ENCODE measurements at regions of chr12 and their contacts with region 1.

Region 1: GRCh38 chr12:116508145-116509121 is 50.7 kb upstream of the MAP1LC3B2 start:
- DNase-seq: peak; percentile 65
- ATAC-seq: peak; percentile 92
- H3K4me3 ChIP-seq: peak overlapping the region in 4 of 5 experiments; percentile 38 to 56 (median 48)
- H3K4me3 Mint-ChIP-seq: peak overlapping the region; percentile 87
- H3K27ac ChIP-seq: no peak overlapping the region
- H3K27ac Mint-ChIP-seq: peak overlapping the region; percentile 57
- H3K4me1 ChIP-seq: peaks cover 9 to 16% of the 10 kb centered on the region in 2 donors
- H3K4me1 Mint-ChIP-seq: peaks cover 7% of the 10 kb centered on the region
- H3K27me3 ChIP-seq: peaks cover 0 to 4% (median 0%) of the 10 kb centered on the region in 4 experiments
- H3K27me3 Mint-ChIP-seq: peaks cover 4% of the 10 kb centered on the region
- CTCF ChIP-seq: no peak

Region 2: GRCh38 chr12:116466536-116466935 is 41.9 kb before region 1 on chr12:
- CTCF ChIA-PET with region 1: no interaction called
- POLR2A ChIA-PET with region 1: no interaction called
- intact Hi-C with region 1: no loop called
- DNase-seq: no peak
- ATAC-seq: no peak
- H3K4me3 ChIP-seq: no peak overlapping the region
- H3K4me3 Mint-ChIP-seq: no peak overlapping the region
- H3K27ac ChIP-seq: no peak overlapping the region
- H3K27ac Mint-ChIP-seq: no peak overlapping the region
- H3K4me1 ChIP-seq: no peaks in the 10 kb centered on the region
- H3K4me1 Mint-ChIP-seq: no peaks in the 10 kb centered on the region
- H3K27me3 ChIP-seq: no peaks in the 10 kb centered on the region
- H3K27me3 Mint-ChIP-seq: no peaks in the 10 kb centered on the region
- CTCF ChIP-seq: no peak

Region 3: DNA sequence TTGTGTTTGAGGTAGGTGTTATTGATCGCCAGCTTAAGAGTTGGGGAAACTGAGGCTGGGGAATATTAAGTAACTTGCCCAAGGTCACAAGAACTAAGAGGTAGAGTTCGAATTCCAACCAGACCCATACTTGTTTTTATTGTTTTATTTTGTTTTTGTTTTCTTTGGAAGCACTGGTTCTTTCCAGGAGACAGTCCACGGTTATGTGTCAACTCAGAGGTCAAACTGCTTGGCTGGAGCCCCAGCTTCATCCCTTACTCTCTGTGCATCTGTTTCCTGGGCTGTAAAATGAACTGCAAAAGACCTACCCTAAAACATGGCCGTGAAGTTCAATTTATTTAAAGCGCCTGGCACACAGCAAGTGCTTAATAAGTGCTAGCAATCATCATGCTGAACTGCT is 23.6 kb before region 1 on chr12:
- CTCF ChIA-PET with region 1: no interaction called
- POLR2A ChIA-PET with region 1: no interaction called
- intact Hi-C with region 1: no loop called
- DNase-seq: no peak
- ATAC-seq: no peak
- H3K4me3 ChIP-seq: no peak overlapping the region
- H3K4me3 Mint-ChIP-seq: no peak overlapping the region
- H3K27ac ChIP-seq: no peak overlapping the region
- H3K27ac Mint-ChIP-seq: no peak overlapping the region
- H3K4me1 ChIP-seq: no peaks in the 10 kb centered on the region
- H3K4me1 Mint-ChIP-seq: peaks cover 4% of the 10 kb centered on the region
- H3K27me3 ChIP-seq: no peaks in the 10 kb centered on the region
- H3K27me3 Mint-ChIP-seq: peaks cover 3% of the 10 kb centered on the region
- CTCF ChIP-seq: no peak

Region 4: DNA sequence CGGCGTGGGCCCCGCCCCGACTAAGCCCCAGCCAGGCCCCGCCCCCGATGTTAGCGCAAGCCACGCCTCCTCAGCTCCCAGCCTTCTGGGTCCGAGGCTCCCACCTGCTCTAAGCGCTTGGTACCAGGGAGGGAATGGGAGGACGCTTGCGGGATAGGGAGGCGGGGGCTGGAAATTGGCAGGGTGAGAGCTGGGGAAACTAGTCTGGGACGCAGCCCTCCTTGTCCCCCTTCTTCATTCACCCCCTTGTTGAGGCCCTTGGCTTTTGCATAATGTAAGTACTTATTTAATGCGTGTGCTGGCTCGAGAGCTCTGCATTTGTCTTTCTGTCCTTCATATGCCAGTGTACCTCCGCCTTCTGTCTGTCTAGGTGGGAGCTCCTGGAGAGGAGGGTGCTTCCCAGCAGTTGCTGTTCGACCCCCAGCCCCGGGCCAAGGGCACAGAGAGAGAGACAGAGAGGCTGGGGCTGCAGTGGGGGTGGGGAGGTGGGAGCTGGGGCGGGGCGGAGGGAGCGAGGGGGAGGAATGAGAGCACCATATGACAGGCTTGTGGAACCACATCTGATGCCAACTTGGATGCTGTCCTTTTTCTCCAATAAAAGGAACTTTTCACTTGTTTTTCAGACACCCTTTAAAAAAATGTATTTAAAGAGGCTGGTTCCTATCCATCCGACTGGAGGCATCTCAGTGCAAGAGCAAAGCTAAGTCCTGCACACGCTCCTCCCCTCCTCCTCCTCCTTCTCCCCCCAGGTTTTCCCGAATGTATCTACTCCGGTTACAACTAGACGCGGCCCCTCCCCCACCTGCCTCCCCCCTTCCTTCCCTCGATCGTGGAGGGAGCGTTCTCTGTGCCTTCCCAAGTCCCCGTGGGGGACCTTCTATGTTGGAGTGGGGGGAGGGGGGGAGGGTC is 25.2 kb after region 1 on chr12:
- CTCF ChIA-PET with region 1: no interaction called
- POLR2A ChIA-PET with region 1: no interaction called
- intact Hi-C with region 1: loop called (anchors 1 kb)
- DNase-seq: peak; percentile 85
- ATAC-seq: peak; percentile 93
- H3K4me3 ChIP-seq: peak overlapping the region; percentile 53 to 96 (median 67)
- H3K4me3 Mint-ChIP-seq: peak overlapping the region; percentile 85
- H3K27ac ChIP-seq: no peak overlapping the region
- H3K27ac Mint-ChIP-seq: peak overlapping the region; percentile 90
- H3K4me1 ChIP-seq: peaks cover 37 to 43% of the 10 kb centered on the region in 2 donors
- H3K4me1 Mint-ChIP-seq: peaks cover 52% of the 10 kb centered on the region
- H3K27me3 ChIP-seq: no peaks in the 10 kb centered on the region
- H3K27me3 Mint-ChIP-seq: no peaks in the 10 kb centered on the region
- CTCF ChIP-seq: no peak

Region 5: DNA sequence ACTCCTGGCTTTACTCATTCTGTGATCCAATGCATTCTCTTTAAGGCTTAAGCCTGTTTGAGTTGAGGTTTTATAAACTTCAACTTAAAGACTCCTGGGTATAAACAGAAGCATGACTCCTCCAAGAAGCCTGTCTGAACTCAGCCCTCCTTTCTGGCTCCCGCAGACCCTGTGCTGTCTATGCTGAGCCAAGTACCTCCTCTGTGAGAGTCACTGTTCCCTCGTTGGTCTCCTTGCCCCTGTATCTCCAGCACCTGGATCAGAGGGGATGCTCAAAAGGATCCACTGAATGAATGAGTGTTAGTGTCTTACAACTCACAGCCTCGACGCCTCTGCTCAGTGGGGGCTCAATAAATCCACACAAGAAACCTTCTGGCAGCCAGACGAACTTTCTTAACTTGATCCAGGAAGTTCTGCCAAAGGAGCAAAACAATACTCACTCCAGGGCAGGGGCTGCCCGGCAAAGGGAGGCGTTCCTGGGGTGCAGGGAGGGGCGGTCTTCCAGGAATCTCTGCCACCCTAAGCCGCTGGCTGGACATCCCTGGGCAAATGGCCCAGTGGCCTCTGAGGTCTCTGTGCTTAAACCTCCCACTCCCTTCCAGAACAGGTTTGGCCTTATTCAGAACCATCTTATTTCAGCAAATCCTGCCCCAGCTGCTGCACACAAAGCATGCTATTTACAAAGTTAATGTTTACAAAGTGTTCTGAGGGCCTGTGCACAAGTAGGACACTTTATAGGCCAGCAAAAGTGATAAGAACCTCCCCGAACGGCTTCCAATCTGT is 83.6 kb after region 1 on chr12:
- CTCF ChIA-PET with region 1: no interaction called
- POLR2A ChIA-PET with region 1: no interaction called
- intact Hi-C with region 1: loop called (anchors 5 kb)
- DNase-seq: no peak
- ATAC-seq: no peak
- H3K4me3 ChIP-seq: no peak overlapping the region
- H3K4me3 Mint-ChIP-seq: no peak overlapping the region
- H3K27ac ChIP-seq: peak overlapping the region; percentile 40 to 71
- H3K27ac Mint-ChIP-seq: peak overlapping the region; percentile 65
- H3K4me1 ChIP-seq: peaks cover 30 to 39% of the 10 kb centered on the region in 2 donors
- H3K4me1 Mint-ChIP-seq: peaks cover 43% of the 10 kb centered on the region
- H3K27me3 ChIP-seq: no peaks in the 10 kb centered on the region
- H3K27me3 Mint-ChIP-seq: no peaks in the 10 kb centered on the region
- CTCF ChIP-seq: no peak

Region 6: DNA sequence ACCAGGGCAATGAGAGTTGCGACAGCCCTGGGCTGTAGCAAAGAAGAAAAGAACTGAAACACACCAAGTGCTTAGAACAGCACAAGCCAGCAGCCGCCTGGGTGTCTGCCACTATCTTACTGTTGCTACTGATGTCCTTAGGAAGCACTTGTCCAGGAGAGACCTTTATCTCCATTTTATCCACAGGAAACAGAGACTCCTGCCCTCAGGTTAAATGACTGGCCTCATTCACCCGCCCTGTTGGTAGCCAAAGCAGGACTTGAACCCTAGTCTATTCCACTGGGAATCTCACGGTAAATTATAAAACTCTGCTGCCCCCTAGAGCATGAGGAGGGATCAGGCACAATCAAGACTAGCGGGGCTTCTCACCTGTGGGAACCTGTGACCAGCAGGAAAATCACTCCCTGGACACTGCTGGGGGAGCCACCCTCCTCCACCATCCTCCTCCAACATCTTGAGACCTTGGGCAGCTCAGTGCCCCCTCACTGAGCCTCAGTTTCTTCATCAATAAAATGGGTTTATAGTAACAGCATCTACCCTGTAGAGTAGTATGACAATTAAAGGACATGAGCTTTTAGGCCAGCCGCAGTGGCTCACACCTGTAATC is 611.3 kb after region 1 on chr12:
- CTCF ChIA-PET with region 1: no interaction called
- POLR2A ChIA-PET with region 1: no interaction called
- intact Hi-C with region 1: no loop called
- DNase-seq: peak; percentile 42
- ATAC-seq: no peak
- H3K4me3 ChIP-seq: no peak overlapping the region
- H3K4me3 Mint-ChIP-seq: no peak overlapping the region
- H3K27ac ChIP-seq: no peak overlapping the region
- H3K27ac Mint-ChIP-seq: no peak overlapping the region
- H3K4me1 ChIP-seq: no peaks in the 10 kb centered on the region
- H3K4me1 Mint-ChIP-seq: no peaks in the 10 kb centered on the region
- H3K27me3 ChIP-seq: no peaks in the 10 kb centered on the region
- H3K27me3 Mint-ChIP-seq: no peaks in the 10 kb centered on the region
- CTCF ChIP-seq: peak; percentile 69

Region 7: DNA sequence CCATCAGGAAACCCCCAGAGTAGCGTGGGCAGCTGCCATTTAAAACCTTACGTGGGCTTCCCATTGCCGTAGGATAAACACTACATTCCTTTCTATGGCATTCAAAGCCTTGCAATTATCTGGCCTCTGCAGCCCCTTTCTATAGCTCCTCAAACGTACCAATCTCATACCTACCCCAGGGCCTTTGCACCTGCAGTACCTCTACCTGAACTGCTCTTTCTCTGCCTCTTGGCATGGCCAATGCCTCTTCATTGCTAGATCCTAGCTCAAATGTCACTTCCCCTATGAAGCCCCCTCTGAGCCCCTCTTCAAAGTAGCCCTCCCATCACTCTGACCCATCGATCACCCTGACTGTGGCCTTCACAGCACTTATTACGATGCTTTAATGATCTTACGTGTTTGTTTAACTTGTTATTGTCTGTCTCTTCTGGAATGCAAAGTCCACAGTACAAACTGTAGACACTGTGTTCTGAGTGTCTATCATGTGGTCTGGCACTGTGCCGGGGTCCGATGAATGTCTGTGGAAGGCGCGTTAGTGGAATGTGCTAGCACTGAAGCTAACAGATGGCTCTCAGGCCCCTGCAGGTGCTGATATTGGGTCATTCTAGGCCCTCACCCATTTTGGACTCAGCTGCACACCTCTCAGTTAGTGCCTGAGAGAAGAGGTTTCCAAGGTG is 1010.3 kb after region 1 on chr12:
- CTCF ChIA-PET with region 1: no interaction called
- POLR2A ChIA-PET with region 1: no interaction called
- intact Hi-C with region 1: no loop called
- DNase-seq: no peak
- ATAC-seq: no peak
- H3K4me3 ChIP-seq: no peak overlapping the region
- H3K4me3 Mint-ChIP-seq: no peak overlapping the region
- H3K27ac ChIP-seq: no peak overlapping the region
- H3K27ac Mint-ChIP-seq: no peak overlapping the region
- H3K4me1 ChIP-seq: no peaks in the 10 kb centered on the region
- H3K4me1 Mint-ChIP-seq: no peaks in the 10 kb centered on the region
- H3K27me3 ChIP-seq: peaks cover 0 to 4% (median 1%) of the 10 kb centered on the region in 4 experiments
- H3K27me3 Mint-ChIP-seq: peaks cover 3% of the 10 kb centered on the region
- CTCF ChIP-seq: no peak